Psoas muscle (tissue), 8 donors: ENCODE measurements at regions of chr5 and their contacts with region 1.

Region 1: GRCh38 chr5:61658592-61659008 is 326.5 kb downstream of the ZSWIM6 start:
- DNase-seq: peak; percentile 75 to 87
- ATAC-seq: peak; percentile 86 to 94 (median 87)
- H3K4me3 ChIP-seq: no peak overlapping the region
- H3K27ac ChIP-seq: no peak overlapping the region
- H3K4me1 ChIP-seq: no peaks in the 10 kb centered on the region
- H3K27me3 ChIP-seq: no peaks in the 10 kb centered on the region
- CTCF ChIP-seq: peak; percentile 95

Region 2: DNA sequence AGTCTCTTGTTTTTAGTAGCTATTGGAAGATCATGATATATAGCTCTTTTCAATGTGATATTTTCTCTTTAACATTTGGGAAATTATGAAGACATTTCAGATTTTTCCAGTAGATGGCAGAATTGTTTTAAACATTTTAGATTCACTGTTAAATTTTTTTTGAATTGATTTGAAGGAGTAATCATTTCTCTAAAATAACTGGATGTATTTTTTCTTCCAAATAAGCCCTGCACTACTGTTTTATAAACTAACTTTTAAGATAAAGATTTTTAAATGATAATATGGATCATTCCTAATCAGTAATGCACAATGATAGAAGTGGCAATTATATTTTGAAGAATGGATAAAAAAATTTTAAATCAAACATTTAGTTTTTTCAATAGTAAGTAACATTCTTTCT is 699.4 kb before region 1 on chr5:
- intact Hi-C with region 1: loop called in 1 of 2 experiments (anchors 10 kb)
- DNase-seq: no peak
- ATAC-seq: no peak
- H3K4me3 ChIP-seq: no peak overlapping the region
- H3K27ac ChIP-seq: no peak overlapping the region
- H3K4me1 ChIP-seq: peaks cover 22% of the 10 kb centered on the region
- H3K27me3 ChIP-seq: no peaks in the 10 kb centered on the region
- CTCF ChIP-seq: peak; percentile 30

Region 3: GRCh38 chr5:61055434-61056006 is 603.1 kb before region 1 on chr5:
- intact Hi-C with region 1: loop called in 1 of 2 experiments (anchors 2 kb)
- DNase-seq: no peak
- ATAC-seq: peak in 1 of 4 donors; percentile 60
- H3K4me3 ChIP-seq: no peak overlapping the region
- H3K27ac ChIP-seq: no peak overlapping the region
- H3K4me1 ChIP-seq: no peaks in the 10 kb centered on the region
- H3K27me3 ChIP-seq: no peaks in the 10 kb centered on the region
- CTCF ChIP-seq: peak; percentile 57

Region 4: DNA sequence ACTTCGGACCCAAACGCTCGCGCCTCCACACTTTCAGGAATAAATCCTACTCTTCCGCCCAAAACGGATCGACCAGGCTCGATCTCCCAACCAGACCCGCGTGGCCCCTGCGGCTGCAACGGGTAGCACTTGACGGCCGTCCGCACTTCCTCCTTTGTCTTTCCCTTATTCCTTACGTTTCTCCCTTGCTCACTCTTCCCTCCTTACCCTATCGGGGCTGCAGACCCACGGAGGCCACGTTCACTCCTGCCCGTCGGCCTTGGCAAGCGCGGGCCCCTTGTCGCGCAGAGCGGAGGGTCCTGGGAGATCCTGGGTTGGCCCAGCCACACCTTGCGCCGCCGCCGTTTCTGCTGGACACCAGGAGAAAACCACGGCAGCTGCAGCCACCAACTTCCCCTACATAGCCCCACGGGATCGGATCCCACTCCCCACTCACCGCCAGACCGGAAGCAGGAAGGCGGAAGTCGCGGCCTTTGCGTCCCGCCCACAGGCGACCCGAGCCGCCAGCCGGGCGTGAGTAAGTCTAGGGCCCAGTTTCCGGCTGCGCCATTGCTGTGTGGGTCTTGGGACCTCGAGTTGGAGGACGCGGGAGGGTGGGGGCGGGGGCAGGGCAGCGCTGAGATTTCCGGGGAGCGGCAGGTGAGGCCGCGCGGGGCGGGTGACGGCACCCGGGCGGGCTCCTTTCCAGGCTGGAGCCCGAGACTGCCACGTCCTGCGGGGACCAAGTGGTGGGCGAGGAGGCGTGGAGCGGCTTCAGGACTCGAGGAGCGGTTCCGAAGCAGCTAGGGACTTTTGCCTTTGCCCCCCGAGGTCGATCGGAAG is 496.4 kb before region 1 on chr5 and contains the start of gene SMIM15:
- intact Hi-C with region 1: loop called in 1 of 2 experiments (anchors 5 kb)
- DNase-seq: peak; percentile 90 to 94
- ATAC-seq: peak; percentile 96 to 99 (median 98)
- H3K4me3 ChIP-seq: peak within 1 kb of the TSS; percentile 82
- H3K27ac ChIP-seq: peak within 1 kb of the TSS; percentile 91
- H3K4me1 ChIP-seq: peaks cover 15% of the 10 kb centered on the region
- H3K27me3 ChIP-seq: no peaks in the 10 kb centered on the region
- CTCF ChIP-seq: no peak
- total RNA-seq, gene SMIM15: 10.6 to 19.3 (median 14.5) TPM